Caco-2 (cell line): ENCODE measurements at regions of chr2 and their contacts with region 1.

Region 1: DNA sequence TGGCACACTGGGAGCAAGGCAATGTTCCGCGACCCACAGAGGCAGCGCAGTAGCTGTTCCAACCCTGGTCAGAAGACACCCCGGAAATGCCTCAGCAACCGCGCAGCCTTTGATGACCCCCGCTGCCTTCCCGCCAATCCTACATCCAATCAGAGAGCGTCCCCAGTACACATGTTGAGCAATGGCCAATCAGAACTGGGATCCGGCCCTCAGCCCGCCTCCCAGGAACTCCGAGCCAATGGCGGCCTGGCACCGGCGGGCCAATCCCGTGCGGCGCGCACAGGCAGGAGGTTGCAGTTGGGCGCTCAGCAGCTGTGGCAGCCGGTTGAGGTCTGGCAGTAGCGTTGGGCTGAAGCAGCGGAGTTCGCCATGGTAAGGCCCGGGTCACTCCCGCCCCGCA is at the start of gene TUBA3D:
- DNase-seq: no peak
- H3K4me3 ChIP-seq: no peak within 1 kb of the TSS
- H3K4me3 Mint-ChIP-seq: no peak within 1 kb of the TSS
- H3K27ac Mint-ChIP-seq: no peak within 1 kb of the TSS
- H3K4me1 ChIP-seq: peaks cover 3% of the 10 kb centered on the region
- H3K4me1 Mint-ChIP-seq: no peaks in the 10 kb centered on the region
- H3K27me3 ChIP-seq: no peaks in the 10 kb centered on the region
- H3K27me3 Mint-ChIP-seq: no peaks in the 10 kb centered on the region
- CTCF ChIP-seq: no peak
- total RNA-seq, gene TUBA3D: 0.23 TPM in 1 of 2 replicates, not detected in the other

Region 2: DNA sequence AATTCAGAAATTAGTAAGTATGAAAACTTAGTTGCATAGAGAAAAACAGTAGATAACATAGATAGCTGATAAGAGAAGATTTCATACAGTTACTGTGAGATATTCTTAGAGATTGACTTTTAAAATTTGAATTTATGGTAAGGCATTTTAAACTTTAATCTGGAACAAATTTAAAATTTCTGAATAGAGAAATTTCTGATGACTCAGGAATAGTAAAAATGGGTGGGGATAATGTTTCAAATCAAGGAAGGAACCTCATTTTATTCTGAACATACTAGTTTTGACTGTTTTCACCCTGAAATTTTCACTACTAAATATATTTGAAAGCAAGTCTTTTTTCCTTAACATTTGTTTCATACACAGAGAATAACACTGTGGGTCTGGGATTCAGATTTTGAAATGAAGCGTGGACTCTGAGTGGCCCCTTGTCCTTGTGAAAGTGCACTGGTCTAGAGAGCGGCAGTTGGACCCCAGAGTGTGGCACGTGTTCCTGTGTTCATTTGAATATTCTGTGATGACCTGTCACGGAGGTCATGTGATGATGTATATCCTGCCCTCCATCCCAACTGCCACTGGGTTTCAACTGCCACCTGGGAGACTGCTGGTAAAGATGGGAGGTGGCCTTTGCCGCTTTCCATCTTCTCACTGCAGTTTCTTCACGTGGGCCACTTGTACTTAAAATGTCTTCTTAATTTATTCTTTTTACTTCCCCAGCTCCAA is 73.4 kb before region 1 on chr2:
- CTCF ChIA-PET with region 1: no interaction called
- POLR2A ChIA-PET with region 1: no interaction called
- intact Hi-C with region 1: no loop called
- DNase-seq: no peak
- H3K4me3 ChIP-seq: no peak overlapping the region
- H3K4me3 Mint-ChIP-seq: no peak overlapping the region
- H3K27ac Mint-ChIP-seq: no peak overlapping the region
- H3K4me1 ChIP-seq: no peaks in the 10 kb centered on the region
- H3K4me1 Mint-ChIP-seq: no peaks in the 10 kb centered on the region
- H3K27me3 ChIP-seq: no peaks in the 10 kb centered on the region
- H3K27me3 Mint-ChIP-seq: peaks cover 22% of the 10 kb centered on the region
- CTCF ChIP-seq: no peak

Region 3: GRCh38 chr2:131828164-131828561 is 352.3 kb after region 1 on chr2:
- CTCF ChIA-PET with region 1: interaction called, 11 read pairs
- POLR2A ChIA-PET with region 1: no interaction called
- intact Hi-C with region 1: no loop called
- DNase-seq: no peak
- H3K4me3 ChIP-seq: no peak overlapping the region
- H3K4me3 Mint-ChIP-seq: no peak overlapping the region
- H3K27ac Mint-ChIP-seq: no peak overlapping the region
- H3K4me1 ChIP-seq: no peaks in the 10 kb centered on the region
- H3K4me1 Mint-ChIP-seq: no peaks in the 10 kb centered on the region
- H3K27me3 ChIP-seq: no peaks in the 10 kb centered on the region
- H3K27me3 Mint-ChIP-seq: no peaks in the 10 kb centered on the region
- CTCF ChIP-seq: no peak